ENCODE measurements at regions of chr10 and their contacts with region 1.

Region 1: DNA sequence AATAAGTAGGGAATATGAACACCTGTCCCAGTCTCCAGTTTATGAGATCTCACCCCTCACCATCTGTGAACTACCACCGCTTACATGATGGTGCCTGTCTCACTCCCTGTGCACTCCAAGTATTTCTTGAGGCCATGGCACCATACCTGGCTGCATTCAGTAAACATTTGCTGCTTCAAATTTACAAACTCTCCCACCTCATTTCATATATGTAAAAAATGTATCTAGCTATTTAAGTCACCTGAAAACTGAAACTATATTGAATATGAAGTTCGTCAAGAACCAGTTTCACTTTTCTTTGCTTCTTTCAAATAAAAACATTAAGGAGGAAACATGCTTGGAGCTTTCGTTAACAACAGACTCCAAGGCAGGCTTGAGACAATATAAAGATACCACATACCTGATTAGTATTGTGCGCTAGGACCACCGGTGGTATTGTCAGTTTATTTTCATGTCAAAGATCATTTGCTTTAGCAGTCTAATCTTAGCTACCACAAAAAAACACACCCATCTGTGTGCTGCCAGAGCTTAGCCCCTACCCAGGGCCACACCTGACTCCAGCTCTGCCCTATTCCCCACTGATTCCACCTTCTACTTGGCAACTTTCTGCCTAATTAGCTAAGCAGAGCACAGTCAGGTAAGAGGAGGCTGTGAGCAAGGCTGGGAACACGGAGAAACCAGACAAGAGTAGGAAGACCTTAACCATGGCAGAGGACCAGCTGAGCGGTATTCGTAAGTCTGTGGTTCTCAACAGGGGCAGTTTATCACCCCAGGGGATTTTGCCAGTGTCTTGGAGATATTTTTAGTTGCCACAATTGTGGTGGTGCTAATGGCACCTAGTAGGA is 92.0 kb downstream of the ZFAND4 start:
- DNase-seq: no peak
- ATAC-seq: peak; percentile 81
- H3K4me3 ChIP-seq: peak overlapping the region; percentile 29 to 34
- H3K27ac ChIP-seq: peak overlapping the region; percentile 85
- H3K4me1 ChIP-seq: peaks cover 27% of the 10 kb centered on the region
- H3K27me3 ChIP-seq: no peaks in the 10 kb centered on the region
- CTCF ChIP-seq: no peak

Region 2: GRCh38 chr10:45249978-45250693 is 330.5 kb before region 1 on chr10:
- CTCF ChIA-PET with region 1: no interaction called
- POLR2A ChIA-PET with region 1: no interaction called
- in situ Hi-C with region 1: no loop called
- intact Hi-C with region 1: loop called (anchors 5 kb)
- DNase-seq: peak; percentile 60
- ATAC-seq: peak; percentile 86
- H3K4me3 ChIP-seq: peak overlapping the region; percentile 30 to 44
- H3K27ac ChIP-seq: no peak overlapping the region
- H3K4me1 ChIP-seq: no peaks in the 10 kb centered on the region
- H3K27me3 ChIP-seq: peaks cover 6% of the 10 kb centered on the region; the same call in 1 of the 2 replicates
- CTCF ChIP-seq: peak; percentile 70

Region 3: DNA sequence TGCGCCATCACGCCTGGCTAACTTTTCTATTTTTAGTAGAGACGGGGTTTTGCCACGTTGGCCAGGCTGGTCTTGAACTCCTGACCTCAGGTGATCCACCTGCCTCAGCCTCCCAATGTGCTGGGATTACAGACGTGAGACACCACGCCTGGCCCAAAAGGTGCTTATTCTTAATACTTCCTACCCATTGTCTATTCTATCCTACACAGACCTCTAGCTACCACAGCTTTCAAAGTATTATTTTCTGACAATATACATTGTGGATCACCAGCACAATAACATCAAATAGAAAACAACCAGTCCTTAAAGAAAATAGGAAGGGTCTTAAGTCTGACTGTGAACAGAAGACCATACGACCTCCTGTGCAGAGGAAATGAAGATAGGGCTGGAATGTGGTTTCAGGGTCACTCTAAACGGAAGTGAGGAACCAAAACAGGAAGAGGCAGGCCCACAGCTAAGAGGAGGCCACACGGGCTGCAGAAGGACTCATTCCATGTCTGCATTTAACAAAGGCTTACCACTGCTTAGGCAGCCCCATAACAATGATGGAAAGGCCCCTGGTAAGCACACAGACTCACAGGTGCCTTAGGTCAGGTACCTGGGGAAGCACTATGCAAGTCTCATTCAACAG is 23.2 kb before region 1 on chr10:
- CTCF ChIA-PET with region 1: interaction called, 11 read pairs
- POLR2A ChIA-PET with region 1: no interaction called
- in situ Hi-C with region 1: no loop called
- intact Hi-C with region 1: no loop called
- DNase-seq: no peak
- ATAC-seq: no peak
- H3K4me3 ChIP-seq: no peak overlapping the region
- H3K27ac ChIP-seq: no peak overlapping the region
- H3K4me1 ChIP-seq: peaks cover 18% of the 10 kb centered on the region
- H3K27me3 ChIP-seq: no peaks in the 10 kb centered on the region
- CTCF ChIP-seq: no peak

Region 4: GRCh38 chr10:45569471-45569870 is 11.1 kb before region 1 on chr10:
- CTCF ChIA-PET with region 1: no interaction called
- POLR2A ChIA-PET with region 1: no interaction called
- in situ Hi-C with region 1: no loop called
- intact Hi-C with region 1: no loop called
- DNase-seq: no peak
- ATAC-seq: no peak
- H3K4me3 ChIP-seq: no peak overlapping the region
- H3K27ac ChIP-seq: no peak overlapping the region
- H3K4me1 ChIP-seq: no peaks in the 10 kb centered on the region
- H3K27me3 ChIP-seq: no peaks in the 10 kb centered on the region
- CTCF ChIP-seq: no peak

Region 5: GRCh38 chr10:45594276-45595106 is 13.9 kb after region 1 on chr10:
- CTCF ChIA-PET with region 1: no interaction called
- POLR2A ChIA-PET with region 1: interaction called, 14 read pairs
- in situ Hi-C with region 1: no loop called
- intact Hi-C with region 1: no loop called
- DNase-seq: peak; percentile 60
- ATAC-seq: peak; percentile 96
- H3K4me3 ChIP-seq: peak overlapping the region; percentile 84 to 87
- H3K27ac ChIP-seq: peak overlapping the region; percentile 92
- H3K4me1 ChIP-seq: peaks cover 18% of the 10 kb centered on the region
- H3K27me3 ChIP-seq: no peaks in the 10 kb centered on the region
- CTCF ChIP-seq: peak; percentile 34

Measured in Panc1 (cell line).